GM10248 (cell line): ENCODE measurements at regions of chr2 and their contacts with region 1.

Region 1: DNA sequence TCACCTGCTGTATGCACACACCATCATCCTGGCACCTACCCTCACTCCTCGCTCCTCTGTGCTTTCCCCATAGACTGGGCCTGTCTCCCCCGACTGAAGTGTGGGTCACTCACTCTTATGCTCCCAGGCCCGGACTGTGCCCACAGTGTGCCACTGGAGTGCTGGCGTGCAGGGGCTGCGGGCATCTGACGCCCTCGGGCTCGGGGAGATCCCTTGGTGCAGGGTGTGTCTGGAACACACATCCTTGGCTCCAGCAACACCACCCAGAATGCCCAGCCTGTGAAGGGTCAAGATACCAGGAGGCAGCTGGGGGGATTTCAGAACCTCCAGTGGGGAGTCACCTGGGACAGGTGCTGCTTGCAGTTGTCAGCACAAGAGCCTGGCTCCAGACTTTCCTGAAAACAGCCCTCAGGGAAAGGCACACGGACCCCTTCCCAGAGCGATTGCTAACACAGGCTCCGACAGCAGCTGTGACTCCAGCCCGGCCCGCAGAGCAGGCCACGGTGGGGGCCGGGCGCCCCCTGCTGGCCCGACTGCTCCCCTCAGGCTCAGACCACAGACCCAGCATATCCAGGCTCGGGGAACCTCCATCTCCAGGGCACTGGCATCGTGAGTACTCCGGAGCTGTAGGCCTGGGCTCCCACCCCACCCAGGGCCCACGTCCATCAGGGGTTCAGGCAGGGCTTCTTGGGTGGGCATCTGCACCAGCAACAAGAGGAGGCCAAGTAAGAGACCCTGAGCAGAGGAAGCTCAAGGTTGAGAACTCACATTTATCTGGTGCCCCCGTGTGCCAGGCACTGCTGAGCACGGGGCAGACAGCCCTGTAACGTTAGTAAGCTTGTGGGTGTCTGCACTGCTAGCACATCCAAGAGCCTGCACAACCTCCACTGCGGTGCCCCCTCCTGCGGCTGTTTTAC is 8.6 kb downstream of the HS1BP3 start:
- DNase-seq: peak; percentile 91
- CTCF ChIP-seq: peak; percentile 84

Region 2: DNA sequence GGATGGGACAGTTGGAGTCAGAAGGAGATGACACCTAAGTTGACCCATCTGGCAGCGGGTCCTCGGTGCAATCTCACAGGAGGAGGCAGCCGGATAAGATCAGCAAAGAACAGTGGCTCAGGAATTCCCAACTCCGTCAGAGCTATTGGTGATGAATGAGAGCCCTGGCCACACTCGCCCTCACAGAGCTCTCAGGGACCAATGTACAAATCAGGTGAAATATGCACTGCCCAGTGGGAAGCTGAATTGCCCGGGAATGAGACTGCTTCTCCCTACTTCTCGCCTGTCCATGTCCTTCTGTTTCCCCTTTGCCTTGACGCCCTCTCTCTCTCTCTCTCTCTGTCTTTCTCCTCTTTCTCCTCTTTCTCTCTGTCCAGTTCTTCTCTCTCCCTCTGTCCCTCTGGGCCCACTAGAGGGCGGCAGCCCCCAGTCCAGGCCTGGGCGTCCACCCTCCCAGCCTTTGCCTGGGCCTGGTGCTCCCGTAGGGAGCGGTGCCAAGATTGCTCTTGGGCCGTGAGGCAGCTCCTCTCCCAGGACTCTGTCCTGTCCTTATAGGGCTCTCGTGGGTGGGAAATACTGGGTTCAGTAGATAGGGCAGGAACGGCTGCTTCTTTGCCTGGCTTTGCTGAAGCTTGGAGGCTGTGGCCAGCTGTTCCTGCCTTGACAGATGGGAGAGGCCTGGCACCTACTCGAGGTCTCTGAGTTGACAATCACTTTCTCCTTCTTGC is 263.4 kb before region 1 on chr2:
- CTCF ChIA-PET with region 1: interaction called, 17 read pairs
- POLR2A ChIA-PET with region 1: no interaction called
- DNase-seq: no peak
- CTCF ChIP-seq: peak; percentile 44

Region 3: GRCh38 chr2:20419007-20419576 is 223.2 kb before region 1 on chr2:
- CTCF ChIA-PET with region 1: interaction called, 92 read pairs
- POLR2A ChIA-PET with region 1: no interaction called
- DNase-seq: no peak
- CTCF ChIP-seq: no peak

Region 4: GRCh38 chr2:20438334-20439192 is 203.8 kb before region 1 on chr2:
- CTCF ChIA-PET with region 1: interaction called, 101 read pairs
- POLR2A ChIA-PET with region 1: interaction called, 8 read pairs
- DNase-seq: no peak
- CTCF ChIP-seq: no peak

Region 5: DNA sequence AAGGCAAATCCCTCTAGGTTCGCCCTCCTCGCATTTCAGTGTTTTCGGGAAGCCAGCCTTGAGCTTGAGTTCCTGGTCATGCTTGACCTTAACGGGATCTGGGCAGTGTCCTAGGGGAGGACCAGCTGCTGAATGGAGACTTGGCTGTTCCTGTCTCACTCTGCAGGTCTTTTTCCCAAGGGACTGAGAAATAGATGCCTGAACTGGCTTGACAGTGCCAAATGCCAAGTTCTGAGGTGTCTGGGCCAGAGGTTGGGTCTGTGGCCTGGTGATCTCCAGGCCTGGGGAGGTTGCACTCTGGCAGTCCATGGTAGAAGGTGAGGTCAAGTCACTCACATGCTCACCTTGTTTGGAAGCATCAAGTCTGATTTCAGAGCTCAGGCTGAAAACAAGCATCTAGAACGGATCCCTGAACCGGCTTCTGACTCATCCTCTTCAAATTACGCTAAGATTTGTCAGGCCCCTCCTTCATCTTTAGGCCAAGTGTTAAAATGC is 175.8 kb before region 1 on chr2:
- CTCF ChIA-PET with region 1: interaction called, 10 read pairs
- POLR2A ChIA-PET with region 1: no interaction called
- DNase-seq: no peak
- CTCF ChIP-seq: no peak

Region 6: GRCh38 chr2:20625491-20626391 is 16.6 kb before region 1 on chr2:
- CTCF ChIA-PET with region 1: interaction called, 46 read pairs
- POLR2A ChIA-PET with region 1: no interaction called
- DNase-seq: no peak
- CTCF ChIP-seq: no peak

Region 7: DNA sequence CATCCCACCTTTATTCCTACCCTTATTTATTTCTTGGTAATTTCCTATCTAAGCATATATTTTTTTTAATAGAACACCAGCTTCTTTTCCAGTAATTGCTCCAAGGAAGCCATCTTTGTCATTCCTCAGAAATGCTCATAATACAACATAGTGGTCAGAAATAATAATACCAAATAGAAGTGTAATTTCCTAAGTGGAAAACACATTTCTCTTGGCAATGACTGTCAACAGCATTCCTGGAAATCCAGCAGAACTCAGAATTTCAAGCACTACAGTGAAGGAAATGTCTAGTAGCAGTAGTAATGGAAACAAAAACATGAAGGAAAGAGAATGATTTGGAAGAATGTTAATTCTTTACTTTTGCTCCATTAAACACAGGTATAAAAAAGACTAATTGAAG is 81.2 kb after region 1 on chr2:
- CTCF ChIA-PET with region 1: no interaction called
- POLR2A ChIA-PET with region 1: no interaction called
- DNase-seq: no peak
- CTCF ChIP-seq: no peak